Transverse colon (tissue), 4 donors: ENCODE measurements at regions of chr10 and their contacts with region 1.

Region 1: DNA sequence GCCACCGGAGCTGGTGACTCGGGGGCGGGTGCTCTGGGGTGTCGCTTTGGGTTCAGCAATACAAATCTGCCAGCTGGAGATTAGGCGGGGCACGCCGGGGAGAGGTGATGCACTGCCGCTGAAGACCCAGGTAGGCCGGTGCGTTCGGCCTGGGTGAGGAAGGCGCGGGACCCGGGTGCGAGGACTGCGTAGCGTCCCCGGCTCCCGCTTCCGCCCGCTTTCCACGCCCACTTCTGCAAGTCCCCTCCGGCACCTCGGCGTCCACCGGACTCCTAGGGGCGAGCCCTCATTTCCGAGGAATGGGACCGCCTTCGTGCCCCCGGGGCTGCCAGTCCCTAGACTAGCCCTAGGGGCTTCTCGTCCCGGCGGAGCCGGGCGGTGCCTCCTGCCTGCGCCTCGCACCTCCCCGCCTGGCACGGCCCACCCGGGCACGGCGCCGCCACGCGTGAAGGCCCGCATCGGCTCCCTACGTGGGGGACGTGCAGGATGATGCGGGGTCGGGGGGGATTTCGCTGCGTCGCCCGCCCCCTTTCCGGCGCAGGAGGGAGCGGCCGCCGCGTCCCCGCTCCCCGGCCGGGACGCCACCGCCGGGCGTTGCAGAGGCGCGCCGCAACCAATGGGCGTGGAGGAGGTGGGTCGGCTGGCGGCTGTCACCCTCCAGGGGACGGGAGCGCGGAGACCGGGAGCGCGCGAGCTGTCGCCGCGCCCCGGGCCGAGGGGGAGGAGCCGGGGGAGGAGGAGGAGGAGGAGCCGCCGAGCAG is 40.0 kb downstream of the HK1 start:
- DNase-seq: peak; percentile 94
- H3K4me3 ChIP-seq: peak overlapping the region; percentile 80 to 84 (median 82)
- H3K27ac ChIP-seq: peak overlapping the region; percentile 94 to 97 (median 96)
- H3K4me1 ChIP-seq: peaks cover 15 to 42% (median 26%) of the 10 kb centered on the region in 4 donors
- H3K27me3 ChIP-seq: no peaks in the 10 kb centered on the region
- CTCF ChIP-seq: peak in 1 of 5 experiments; percentile 15
- EP300 ChIP-seq: no peak
- POLR2A ChIP-seq: no peak

Region 2: GRCh38 chr10:69360485-69361324 is 42.4 kb after region 1 on chr10:
- in situ Hi-C with region 1: no loop called
- intact Hi-C with region 1: loop called (anchors 5 kb)
- DNase-seq: peak; percentile 81
- H3K4me3 ChIP-seq: no peak overlapping the region
- H3K27ac ChIP-seq: peak overlapping the region; percentile 75 to 82 (median 78)
- H3K4me1 ChIP-seq: peaks cover 23 to 41% (median 39%) of the 10 kb centered on the region in 4 donors
- H3K27me3 ChIP-seq: no peaks in the 10 kb centered on the region
- CTCF ChIP-seq: no peak
- EP300 ChIP-seq: no peak
- POLR2A ChIP-seq: no peak